ENCODE measurements at regions of chr2 and their contacts with region 1.

Region 1: DNA sequence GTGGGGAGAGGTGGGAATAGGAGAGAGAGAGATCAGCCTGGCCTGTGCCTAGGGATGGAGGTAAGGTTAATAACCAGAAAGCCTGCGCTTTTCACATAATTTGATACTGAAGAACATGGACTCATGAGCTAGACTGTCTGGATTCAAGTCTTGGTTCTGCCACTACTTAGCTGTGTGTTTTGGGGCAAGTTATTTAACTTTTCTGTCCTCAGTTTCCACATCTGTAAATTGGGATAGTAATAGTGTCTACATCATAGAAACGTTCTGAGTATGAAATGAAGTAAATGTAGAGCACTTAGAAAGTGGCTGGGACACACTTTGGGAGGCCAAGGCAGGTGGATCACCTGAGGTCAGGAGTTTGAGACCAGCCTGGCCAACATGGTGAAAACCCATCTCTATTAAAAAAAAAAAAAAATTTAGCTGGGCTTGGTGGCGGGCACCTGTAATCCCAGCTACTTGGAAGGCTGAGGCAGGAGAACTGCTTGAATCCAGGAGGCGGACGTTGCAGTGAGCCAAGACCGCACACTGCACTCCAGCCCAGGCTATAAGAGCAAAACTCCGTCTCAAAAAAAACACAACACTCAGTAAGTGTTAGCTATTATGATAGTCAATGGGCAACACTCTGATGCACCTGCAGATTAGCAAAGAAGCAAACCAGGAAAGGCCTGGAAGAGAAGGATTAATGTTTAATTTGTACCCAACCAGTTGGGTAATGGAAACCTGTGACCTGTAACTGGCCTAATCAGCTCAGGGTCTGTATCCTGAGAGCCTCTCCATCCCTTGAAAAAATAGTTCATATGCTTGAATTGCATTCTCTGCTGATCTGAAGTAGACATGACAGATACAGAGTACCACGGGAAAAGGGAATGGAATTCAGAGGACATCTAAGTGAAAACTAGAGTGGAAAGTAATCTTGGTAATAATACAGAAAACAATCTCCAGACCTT is 6.8 kb downstream of the GALM start:
- DNase-seq: no peak
- ATAC-seq: no peak
- H3K4me3 ChIP-seq: no peak overlapping the region
- H3K27ac ChIP-seq: no peak overlapping the region
- H3K4me1 ChIP-seq: peaks cover 0 to 8% of the 10 kb centered on the region in 2 experiments; a peak in 2 of 5 replicates
- H3K27me3 ChIP-seq: no peaks in the 10 kb centered on the region
- CTCF ChIP-seq: no peak
- EP300 ChIP-seq: no peak
- POLR2A ChIP-seq: no peak
- RAD21 ChIP-seq: no peak

Region 2: DNA sequence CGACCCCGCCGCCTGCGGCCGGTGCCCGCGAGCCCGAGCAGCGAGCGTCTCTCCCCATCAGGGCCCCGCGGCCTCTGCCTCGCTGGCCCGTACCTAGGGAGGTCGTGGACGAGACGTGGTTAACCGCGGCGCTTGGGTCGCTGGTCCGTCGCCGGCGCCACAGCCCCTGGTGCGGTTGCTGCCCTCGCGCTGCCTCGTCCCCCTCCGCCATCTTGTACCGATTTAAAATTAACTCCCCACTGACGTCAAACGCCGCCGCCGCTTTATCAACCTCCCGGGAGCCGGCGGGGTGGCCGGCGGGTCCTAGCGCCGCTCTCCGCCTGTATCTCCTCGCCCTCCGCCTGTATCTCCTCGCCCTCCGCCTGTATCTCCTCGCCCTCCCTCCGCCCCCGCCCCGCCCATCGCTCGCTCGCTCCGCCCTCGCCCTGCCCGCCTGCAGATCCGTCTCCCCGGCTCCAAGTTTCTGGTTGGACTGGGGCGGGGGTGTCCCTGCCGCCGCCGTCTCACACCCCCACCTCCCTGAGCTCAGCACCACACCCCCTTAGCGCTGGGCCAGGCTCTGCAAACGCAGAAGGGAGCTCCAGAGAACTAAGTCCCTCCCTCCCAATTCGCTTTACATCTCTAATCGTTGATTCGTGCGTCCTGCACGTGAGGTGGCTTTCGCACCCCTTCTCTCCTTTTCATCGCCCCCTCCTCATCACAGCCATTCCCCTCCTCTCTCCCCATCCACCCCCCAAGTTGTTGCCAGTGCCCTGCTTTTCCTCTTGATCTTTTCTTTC is 295.5 kb before region 1 on chr2 and contains the start of gene ATL2:
- CTCF ChIA-PET with region 1: no interaction called
- POLR2A ChIA-PET with region 1: no interaction called
- in situ Hi-C with region 1: no loop called
- intact Hi-C with region 1: no loop called
- DNase-seq: peak; percentile 91 to 97 (median 92)
- ATAC-seq: peak; percentile 80
- H3K4me3 ChIP-seq: peak within 1 kb of the TSS; percentile 91
- H3K27ac ChIP-seq: peak within 1 kb of the TSS; percentile 96
- H3K4me1 ChIP-seq: peaks cover 11 to 34% of the 10 kb centered on the region in 2 experiments
- H3K27me3 ChIP-seq: no peaks in the 10 kb centered on the region
- CTCF ChIP-seq: no peak
- EP300 ChIP-seq: peak; percentile 40
- POLR2A ChIP-seq: peak; percentile 92
- RAD21 ChIP-seq: no peak
- polyA plus RNA-seq, gene ATL2: 12.0 to 18.3 TPM

Region 3: DNA sequence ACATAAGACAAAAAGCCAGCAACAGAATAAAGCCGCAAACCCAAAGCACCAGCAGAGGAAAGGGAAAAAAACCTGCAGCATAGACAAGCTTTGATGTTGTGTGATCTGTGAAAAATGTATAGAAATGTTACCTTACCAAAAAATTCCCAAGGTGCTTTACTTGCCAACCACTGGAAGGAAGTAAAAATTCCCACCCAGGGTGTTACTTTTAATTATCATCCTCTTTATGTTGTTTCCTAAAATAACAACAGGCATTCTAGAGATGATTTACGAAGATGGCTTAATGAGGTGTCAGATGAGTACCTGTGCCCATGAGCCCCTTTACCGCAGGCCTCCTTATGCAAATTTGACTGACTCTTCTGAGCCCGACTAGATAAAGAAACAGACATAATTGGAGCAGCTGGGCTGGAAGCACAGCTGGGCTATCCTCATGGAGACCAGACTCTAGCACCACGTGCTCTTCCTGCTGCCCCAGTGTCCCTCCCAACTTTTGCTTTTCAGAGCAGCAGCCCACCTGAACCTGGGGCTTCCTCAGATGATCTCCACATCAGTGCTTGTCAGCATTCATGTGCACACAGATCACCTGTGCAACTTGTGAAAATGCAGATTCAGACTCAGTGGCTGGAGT is 37.0 kb after region 1 on chr2:
- CTCF ChIA-PET with region 1: no interaction called
- POLR2A ChIA-PET with region 1: interaction called, 3 read pairs
- in situ Hi-C with region 1: loop called (anchors 5 kb)
- intact Hi-C with region 1: no loop called
- DNase-seq: no peak
- ATAC-seq: no peak
- H3K4me3 ChIP-seq: no peak overlapping the region
- H3K27ac ChIP-seq: no peak overlapping the region
- H3K4me1 ChIP-seq: peaks cover 4 to 6% of the 10 kb centered on the region in 2 experiments; a peak in 3 of 5 replicates
- H3K27me3 ChIP-seq: no peaks in the 10 kb centered on the region
- CTCF ChIP-seq: no peak
- EP300 ChIP-seq: no peak
- POLR2A ChIP-seq: no peak
- RAD21 ChIP-seq: no peak